OCI-LY7 (cell line): ENCODE measurements at regions of chr5 and their contacts with region 1.

Region 1: DNA sequence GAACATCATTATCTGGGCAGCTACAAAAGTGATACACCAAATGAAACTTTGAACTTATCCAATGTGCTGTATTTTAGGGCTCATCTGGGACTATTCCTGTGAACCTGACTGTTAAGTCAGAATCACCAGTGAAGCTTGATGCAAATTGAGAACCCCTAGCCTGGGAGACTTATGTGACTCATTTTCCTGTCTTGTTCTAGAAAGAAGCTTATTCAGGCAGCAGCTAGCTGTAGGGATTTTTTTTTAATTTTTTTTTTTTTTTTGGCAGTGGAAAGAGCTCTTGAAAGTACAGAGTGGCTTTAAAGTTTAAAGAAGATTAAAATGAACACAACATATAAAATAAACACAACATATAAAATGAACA is 81.1 kb upstream of the TNFAIP8 start:
- DNase-seq: peak; percentile 58
- H3K4me3 ChIP-seq: peak overlapping the region; percentile 48
- H3K27ac ChIP-seq: peak overlapping the region; percentile 98
- H3K4me1 ChIP-seq: peaks cover 99% of the 10 kb centered on the region
- CTCF ChIP-seq: no peak

Region 2: DNA sequence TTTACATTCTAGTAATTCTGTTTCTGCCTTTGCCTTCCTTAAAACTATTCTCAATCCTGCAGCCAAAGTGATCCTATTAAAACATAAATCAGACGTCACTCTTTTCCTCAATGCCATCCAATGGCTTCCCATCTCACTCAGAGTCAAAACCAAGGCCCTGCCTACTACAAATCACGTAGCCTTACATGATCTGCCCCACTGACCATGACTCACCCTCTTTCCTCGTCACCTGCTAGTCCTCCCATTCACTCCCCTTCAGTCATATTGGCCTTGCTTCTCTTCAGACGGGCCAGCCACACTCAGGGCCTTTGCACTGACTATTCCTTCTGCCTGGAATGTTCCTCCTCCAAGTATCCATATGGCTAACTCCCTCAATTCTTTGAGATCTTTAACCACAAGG is 242.8 kb before region 1 on chr5:
- CTCF ChIA-PET with region 1: no interaction called
- POLR2A ChIA-PET with region 1: interaction called, 10 read pairs
- intact Hi-C with region 1: no loop called
- DNase-seq: peak; percentile 76
- H3K4me3 ChIP-seq: peak overlapping the region; percentile 44
- H3K27ac ChIP-seq: peak overlapping the region; percentile 97
- H3K4me1 ChIP-seq: peaks cover 69% of the 10 kb centered on the region
- CTCF ChIP-seq: no peak

Region 3: GRCh38 chr5:119302916-119303897 is 28.5 kb after region 1 on chr5:
- CTCF ChIA-PET with region 1: interaction called, 3 read pairs
- POLR2A ChIA-PET with region 1: interaction called, 25 read pairs
- intact Hi-C with region 1: no loop called
- DNase-seq: no peak
- H3K4me3 ChIP-seq: no peak overlapping the region
- H3K27ac ChIP-seq: no peak overlapping the region
- H3K4me1 ChIP-seq: peaks cover 60% of the 10 kb centered on the region
- CTCF ChIP-seq: no peak

Region 4: GRCh38 chr5:119315516-119315949 is 40.8 kb after region 1 on chr5:
- CTCF ChIA-PET with region 1: interaction called, 3 read pairs
- POLR2A ChIA-PET with region 1: interaction called, 22 read pairs
- intact Hi-C with region 1: no loop called
- DNase-seq: peak; percentile 81
- H3K4me3 ChIP-seq: peak overlapping the region; percentile 5
- H3K27ac ChIP-seq: peak overlapping the region; percentile 57
- H3K4me1 ChIP-seq: peaks cover 100% of the 10 kb centered on the region
- CTCF ChIP-seq: peak; percentile 84